Endothelial cell of umbilical vein (primary cell): ENCODE measurements at regions of chr18 and their contacts with region 1.

Region 1: DNA sequence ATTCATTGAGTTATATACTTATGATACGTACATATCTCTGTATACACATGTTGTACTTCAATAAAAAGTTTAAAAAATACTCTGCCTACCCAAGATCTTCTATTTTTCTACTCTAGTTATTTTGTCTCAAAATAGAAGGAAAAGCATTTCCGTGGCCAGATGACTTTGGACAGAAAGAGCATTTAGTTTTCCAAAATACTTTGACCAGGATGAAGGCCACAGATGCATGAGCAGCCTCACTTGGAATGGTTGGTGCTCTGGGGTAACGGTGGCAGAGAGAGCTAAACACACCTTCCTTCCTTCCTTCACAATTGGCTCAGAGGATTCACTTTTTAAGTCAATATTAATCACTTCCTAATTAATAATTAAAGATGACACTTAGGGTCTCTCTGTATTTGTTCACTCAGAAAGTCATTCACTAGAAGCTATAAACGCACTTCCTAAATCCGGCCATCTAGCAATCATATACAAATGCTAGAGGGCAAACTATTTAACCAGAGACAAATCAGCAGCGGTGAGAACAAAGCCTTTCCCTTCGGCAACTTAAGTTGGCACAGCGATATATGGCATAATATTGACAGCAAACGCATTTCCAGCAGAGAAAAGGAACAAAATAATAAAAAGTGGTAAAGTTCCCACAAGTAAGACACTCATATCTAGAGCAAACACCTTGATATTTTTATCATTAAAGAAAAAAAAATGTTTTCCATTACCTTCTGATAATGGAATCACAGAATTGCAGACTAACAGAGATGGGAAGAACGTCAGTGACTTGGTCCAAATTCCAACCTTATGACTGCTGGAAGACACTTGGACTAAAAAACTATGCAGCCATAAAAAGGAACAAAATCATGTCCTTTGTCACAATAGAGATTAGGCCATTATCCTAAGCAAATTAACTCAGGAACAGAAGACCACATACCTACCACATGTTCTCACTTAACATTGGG is 55.9 kb upstream of the NARS1 start:
- DNase-seq: peak; percentile 88
- H3K4me3 ChIP-seq: no peak overlapping the region
- H3K27ac ChIP-seq: peak overlapping the region; percentile 70
- H3K4me1 ChIP-seq: peaks cover 36% of the 10 kb centered on the region
- H3K27me3 ChIP-seq: no peaks in the 10 kb centered on the region
- CTCF ChIP-seq: no peak
- POLR2A ChIP-seq: no peak

Region 2: DNA sequence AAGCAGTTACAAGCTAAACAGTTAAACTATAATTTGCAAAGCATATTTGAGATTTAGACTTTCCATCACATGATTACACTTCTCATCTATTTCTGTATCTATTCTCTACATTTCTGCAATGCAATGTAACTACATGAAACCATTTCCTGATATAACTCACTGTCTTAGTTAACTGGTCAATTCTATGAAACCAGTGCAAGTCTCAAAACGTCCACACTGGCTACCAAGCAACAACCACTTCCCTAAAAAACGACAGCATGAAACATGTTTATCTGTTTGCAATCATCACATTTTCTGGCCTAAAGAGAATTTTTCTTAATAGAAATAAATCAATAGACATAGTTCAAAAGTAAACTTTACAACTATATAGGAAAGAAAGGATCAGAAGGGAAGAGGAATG is 108.4 kb before region 1 on chr18:
- CTCF ChIA-PET with region 1: no interaction called
- POLR2A ChIA-PET with region 1: no interaction called
- dilution Hi-C with region 1: no loop called
- intact Hi-C with region 1: no loop called
- DNase-seq: no peak
- H3K4me3 ChIP-seq: no peak overlapping the region
- H3K27ac ChIP-seq: no peak overlapping the region
- H3K4me1 ChIP-seq: no peaks in the 10 kb centered on the region
- H3K27me3 ChIP-seq: no peaks in the 10 kb centered on the region
- CTCF ChIP-seq: no peak
- POLR2A ChIP-seq: no peak

Region 3: DNA sequence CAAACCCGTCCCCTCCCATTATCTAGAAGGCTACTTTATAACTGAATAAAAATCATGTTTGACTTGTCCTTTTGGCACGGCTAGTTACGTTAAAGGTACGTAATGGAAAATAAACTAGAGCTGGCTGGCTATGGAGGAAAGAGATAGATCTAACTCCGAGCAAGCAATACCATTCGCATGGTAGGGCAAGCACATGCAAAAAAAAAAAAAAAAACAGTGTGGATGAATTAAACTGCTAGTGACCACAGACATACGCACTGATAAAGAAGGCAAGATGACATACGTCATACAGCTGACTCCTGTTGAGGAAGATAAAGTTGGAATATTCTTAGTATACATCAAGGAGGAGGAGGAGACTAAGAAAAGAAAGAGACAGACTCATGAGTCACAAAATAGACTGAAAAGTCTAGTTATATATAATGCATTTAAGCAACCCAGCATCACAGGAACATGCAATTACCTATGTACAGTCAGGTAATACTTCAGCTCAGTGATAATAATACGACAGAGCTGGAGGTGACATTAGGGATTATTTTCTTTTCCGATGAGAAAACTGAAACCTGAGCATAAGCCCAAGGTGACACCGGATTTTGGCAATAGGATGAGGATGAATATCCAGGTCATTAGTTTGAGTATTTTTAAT is 18.0 kb before region 1 on chr18:
- CTCF ChIA-PET with region 1: no interaction called
- POLR2A ChIA-PET with region 1: no interaction called
- dilution Hi-C with region 1: no loop called
- intact Hi-C with region 1: no loop called
- DNase-seq: no peak
- H3K4me3 ChIP-seq: no peak overlapping the region
- H3K27ac ChIP-seq: no peak overlapping the region
- H3K4me1 ChIP-seq: peaks cover 9% of the 10 kb centered on the region
- H3K27me3 ChIP-seq: no peaks in the 10 kb centered on the region
- CTCF ChIP-seq: no peak
- POLR2A ChIP-seq: no peak

Region 4: DNA sequence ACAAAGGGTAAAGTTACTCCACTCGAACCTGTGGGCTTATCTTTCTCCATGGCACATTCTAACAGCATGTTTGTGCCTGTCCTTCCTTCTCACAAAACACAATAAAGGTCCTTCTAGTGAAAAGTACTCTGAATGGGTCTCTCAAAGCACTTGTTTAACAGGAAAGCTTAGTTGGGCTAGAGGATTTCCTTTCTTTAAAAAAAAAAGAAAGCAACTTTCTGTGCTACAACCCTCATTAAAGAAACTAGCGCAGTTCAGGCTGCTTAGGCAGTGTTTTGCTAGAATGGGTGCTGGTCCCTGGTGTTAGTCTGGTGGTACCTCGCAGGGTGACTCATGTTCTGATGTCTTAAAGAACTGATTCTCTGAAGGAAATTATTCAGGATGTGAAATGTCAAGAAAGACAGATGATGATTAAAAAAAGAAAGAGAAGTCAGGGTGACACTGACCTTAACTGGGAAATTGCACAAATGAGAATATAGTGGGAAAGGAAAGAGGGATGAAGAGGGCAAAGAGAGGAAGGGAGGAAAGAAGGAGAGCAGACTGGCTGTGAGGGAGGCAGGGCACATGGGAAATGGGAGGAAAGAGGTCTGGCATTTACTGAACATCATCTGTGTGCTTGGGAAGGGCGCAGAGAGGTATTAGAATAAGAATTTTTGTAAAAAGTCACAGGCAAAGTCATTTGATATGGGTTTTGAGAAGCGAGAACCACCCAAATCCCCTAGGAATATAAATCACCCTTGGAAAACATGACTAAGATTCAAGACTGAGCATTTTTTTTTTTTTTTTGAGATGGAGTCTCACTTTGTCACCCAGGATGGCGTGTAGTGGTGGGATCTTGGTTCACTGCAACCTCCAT is 50.6 kb after region 1 on chr18:
- CTCF ChIA-PET with region 1: no interaction called
- POLR2A ChIA-PET with region 1: interaction called, 3 read pairs
- dilution Hi-C with region 1: no loop called
- intact Hi-C with region 1: loop called (anchors 2 kb)
- DNase-seq: peak; percentile 96
- H3K4me3 ChIP-seq: no peak overlapping the region
- H3K27ac ChIP-seq: peak overlapping the region; percentile 45
- H3K4me1 ChIP-seq: peaks cover 23% of the 10 kb centered on the region
- H3K27me3 ChIP-seq: no peaks in the 10 kb centered on the region
- CTCF ChIP-seq: no peak
- POLR2A ChIP-seq: no peak

Region 5: DNA sequence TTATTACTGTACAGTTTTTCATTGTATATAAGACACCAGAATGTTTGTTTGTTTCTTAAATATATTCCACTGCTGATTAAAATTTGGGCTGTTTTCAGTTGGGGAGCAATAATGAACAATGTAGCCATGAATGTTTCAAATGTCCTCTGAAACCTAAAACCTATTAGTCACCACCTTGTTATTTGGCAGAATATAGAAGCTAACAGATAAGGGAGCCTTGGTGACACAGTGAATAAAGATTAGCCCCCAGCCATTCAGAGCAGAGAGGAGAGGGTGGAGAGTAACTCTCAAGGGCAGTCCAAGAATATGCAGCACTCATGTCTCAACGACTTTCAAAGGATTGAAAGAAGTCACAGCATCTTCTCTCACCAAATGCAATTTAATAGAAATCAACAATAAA is 168.7 kb after region 1 on chr18:
- CTCF ChIA-PET with region 1: no interaction called
- POLR2A ChIA-PET with region 1: no interaction called
- dilution Hi-C with region 1: no loop called
- intact Hi-C with region 1: loop called (anchors 5 kb)
- DNase-seq: peak; percentile 87
- H3K4me3 ChIP-seq: no peak overlapping the region
- H3K27ac ChIP-seq: peak overlapping the region; percentile 81
- H3K4me1 ChIP-seq: peaks cover 19% of the 10 kb centered on the region
- H3K27me3 ChIP-seq: no peaks in the 10 kb centered on the region
- CTCF ChIP-seq: no peak
- POLR2A ChIP-seq: no peak